ENCODE measurements at regions of chr3 and their contacts with region 1.

Region 1: GRCh38 chr3:195117978-195118581 is 152.9 kb downstream of the XXYLT1 start:
- DNase-seq: no peak
- H3K4me3 ChIP-seq: no peak overlapping the region
- H3K27ac ChIP-seq: peak overlapping the region; percentile 11
- H3K27me3 ChIP-seq: no peaks in the 10 kb centered on the region
- CTCF ChIP-seq: no peak; the same call in 1 of the 2 replicates

Region 2: GRCh38 chr3:195106418-195106906 is 11.6 kb before region 1 on chr3:
- CTCF ChIA-PET with region 1: interaction called, 45 read pairs
- POLR2A ChIA-PET with region 1: no interaction called
- DNase-seq: no peak
- H3K4me3 ChIP-seq: no peak overlapping the region
- H3K27ac ChIP-seq: no peak overlapping the region
- H3K27me3 ChIP-seq: no peaks in the 10 kb centered on the region
- CTCF ChIP-seq: peak; percentile 90

Region 3: GRCh38 chr3:195140816-195141793 is 23.0 kb after region 1 on chr3:
- CTCF ChIA-PET with region 1: no interaction called
- POLR2A ChIA-PET with region 1: no interaction called
- DNase-seq: no peak
- H3K4me3 ChIP-seq: no peak overlapping the region
- H3K27ac ChIP-seq: no peak overlapping the region
- H3K27me3 ChIP-seq: no peaks in the 10 kb centered on the region
- CTCF ChIP-seq: no peak

Region 4: GRCh38 chr3:195162033-195162669 is 44.1 kb after region 1 on chr3:
- CTCF ChIA-PET with region 1: no interaction called
- POLR2A ChIA-PET with region 1: no interaction called
- DNase-seq: no peak
- H3K4me3 ChIP-seq: no peak overlapping the region
- H3K27ac ChIP-seq: peak overlapping the region; percentile 21
- H3K27me3 ChIP-seq: no peaks in the 10 kb centered on the region
- CTCF ChIP-seq: no peak